Right ventricle myocardium superior (tissue), 1 donor: ENCODE measurements at regions of chr12 and their contacts with region 1.

Region 1: GRCh38 chr12:39272871-39273770 is 169.8 kb downstream of the KIF21A start:
- DNase-seq: no peak
- ATAC-seq: peak; percentile 31

Region 2: DNA sequence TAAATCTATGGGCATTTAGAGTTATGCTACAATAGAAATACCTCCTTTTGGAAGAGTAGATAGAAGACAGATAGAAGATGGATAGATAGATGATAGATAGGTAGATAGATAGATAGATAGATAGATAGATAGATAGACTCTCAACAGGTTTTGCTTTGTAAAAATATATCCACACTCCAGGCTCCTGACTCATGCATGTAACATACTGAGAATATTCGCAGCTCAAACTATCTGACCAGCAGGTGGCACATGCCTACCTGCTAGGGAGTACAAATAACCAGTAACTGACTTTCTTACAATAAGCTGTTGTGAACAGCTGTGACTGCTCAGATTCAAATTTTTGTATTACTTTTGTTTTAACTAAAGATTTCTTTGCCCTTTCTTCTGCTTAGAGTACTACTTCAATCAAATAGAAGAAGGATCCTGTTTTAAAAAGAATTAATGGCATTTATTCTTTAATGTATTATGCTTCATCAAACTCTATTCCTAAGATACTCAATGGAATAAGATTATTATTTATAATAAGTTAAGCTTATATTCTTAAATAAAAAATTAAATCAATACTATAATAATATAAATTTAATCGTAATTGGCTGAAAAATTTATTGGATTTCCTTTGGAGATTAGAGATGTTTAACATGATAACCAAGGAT is 352.0 kb before region 1 on chr12:
- intact Hi-C with region 1: loop called (anchors 5 kb)
- DNase-seq: peak; percentile 41
- ATAC-seq: peak; percentile 84

Region 3: DNA sequence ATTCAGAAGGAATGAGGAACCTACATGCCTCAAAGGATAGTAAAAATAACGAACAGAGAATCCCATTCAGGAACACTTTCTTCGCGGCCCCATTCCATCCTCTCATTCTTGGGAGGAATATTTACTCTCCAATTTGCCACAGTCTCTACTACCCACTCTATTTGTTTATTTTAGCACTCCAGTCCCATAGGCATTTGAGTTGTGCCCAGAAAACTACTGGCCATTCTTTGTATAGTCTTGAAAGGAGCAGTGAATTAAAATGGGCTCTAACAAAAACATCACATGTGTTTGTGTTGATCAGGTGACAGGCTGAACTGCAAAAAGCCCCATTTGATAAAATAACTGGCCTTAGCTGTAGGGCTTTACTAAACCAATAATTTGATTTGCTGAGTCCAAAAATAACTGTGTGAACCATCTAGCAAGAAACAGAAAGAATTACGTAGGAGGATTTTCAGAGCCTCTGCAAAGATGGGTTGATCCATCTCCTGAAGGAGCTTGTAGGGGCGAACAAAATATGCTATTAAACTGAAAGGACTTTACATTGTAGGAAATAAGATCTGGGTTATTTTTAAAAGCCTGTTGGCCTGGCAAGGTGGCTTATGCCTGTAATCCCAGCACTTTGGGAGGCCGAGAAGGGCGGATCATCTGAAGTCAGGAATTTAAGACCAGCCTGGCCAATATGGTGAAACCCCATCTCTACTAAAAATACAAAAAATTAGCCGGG is 225.4 kb before region 1 on chr12:
- intact Hi-C with region 1: no loop called
- DNase-seq: no peak
- ATAC-seq: no peak

Region 4: DNA sequence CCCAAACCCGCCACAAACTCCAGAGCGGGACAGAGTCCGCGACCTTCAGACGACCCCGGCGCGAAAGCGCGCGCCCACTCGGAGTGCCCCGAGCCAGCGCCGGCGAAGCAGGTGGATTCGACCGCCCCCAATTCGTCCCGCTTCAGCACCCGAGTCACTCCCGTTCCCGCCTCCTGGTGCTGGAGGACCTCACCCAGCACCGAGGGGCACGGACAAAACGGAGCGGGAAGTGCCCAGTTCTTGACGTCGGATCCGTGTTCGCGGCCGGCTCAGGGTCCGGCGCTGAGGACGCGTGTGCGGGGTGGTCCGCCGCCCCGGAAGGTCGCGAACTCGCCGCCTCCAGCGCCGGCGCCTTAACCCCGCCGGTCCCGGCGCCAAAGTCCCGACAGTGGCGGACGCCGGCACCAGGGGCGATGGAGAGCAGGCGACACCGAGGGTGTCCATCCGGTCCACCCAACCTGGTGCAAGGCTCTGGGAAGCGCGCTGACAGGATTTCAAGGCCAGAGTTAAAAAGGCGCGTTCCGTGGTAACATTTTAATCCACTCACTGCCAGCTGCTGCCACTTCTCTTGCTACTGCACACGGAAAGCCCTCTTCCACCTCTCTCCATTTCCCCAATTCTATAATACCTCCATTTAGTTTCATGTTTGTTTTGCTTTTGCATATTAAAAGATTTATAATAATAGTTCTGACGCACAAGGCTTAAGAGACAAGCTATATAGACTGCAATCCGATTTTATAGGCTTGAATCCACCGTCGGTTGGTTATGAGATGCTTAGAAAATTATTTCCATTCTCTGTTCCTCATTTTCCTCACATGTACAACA is 127.7 kb before region 1 on chr12:
- intact Hi-C with region 1: loop called (anchors 5 kb)
- DNase-seq: peak; percentile 77
- ATAC-seq: peak; percentile 99

Region 5: GRCh38 chr12:39354955-39355354 is 81.8 kb after region 1 on chr12:
- intact Hi-C with region 1: no loop called
- DNase-seq: no peak
- ATAC-seq: no peak